ENCODE measurements at regions of chr6 and their contacts with region 1.

Region 1: GRCh38 chr6:157667211-157668008 is 155.6 kb upstream of the SNX9 start:
- DNase-seq: peak; percentile 57
- ATAC-seq: peak; percentile 73
- H3K4me3 ChIP-seq: no peak overlapping the region
- H3K27ac ChIP-seq: no peak overlapping the region
- H3K4me1 ChIP-seq: peaks cover 13% of the 10 kb centered on the region
- H3K27me3 ChIP-seq: no peaks in the 10 kb centered on the region
- CTCF ChIP-seq: peak; percentile 90

Region 2: DNA sequence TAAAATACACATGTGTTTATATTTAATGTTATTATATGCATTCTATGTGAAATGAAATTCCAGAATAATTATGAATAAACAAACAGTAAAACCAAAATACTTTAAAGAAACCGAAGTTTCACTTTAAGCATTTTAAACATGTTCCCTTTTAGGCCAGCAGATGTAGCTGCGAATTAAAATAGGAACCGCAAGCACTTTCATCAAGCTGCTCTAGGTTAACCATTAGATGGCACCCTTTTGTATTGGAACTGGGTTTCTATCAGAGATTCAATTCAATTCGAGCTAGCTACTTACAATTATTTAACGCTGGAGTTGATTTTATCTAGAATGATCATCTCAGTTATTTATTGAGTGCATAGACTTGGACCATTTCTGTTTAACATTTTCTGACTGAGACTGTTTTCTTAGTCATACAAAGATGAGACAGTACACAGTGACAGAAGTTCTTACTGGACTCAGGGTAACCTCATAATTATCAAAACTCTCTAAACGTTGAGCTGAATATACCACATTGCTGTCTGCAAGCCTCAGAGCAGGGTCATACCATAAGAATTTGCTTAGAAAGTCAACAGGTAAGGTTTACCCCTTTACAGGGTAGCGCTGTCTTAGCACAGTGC is 352.6 kb before region 1 on chr6:
- CTCF ChIA-PET with region 1: no interaction called
- POLR2A ChIA-PET with region 1: no interaction called
- in situ Hi-C with region 1: loop called (anchors 25 kb)
- intact Hi-C with region 1: loop called (anchors 2 kb)
- DNase-seq: peak; percentile 59
- ATAC-seq: peak; percentile 85
- H3K4me3 ChIP-seq: no peak overlapping the region
- H3K27ac ChIP-seq: no peak overlapping the region
- H3K4me1 ChIP-seq: peaks cover 9% of the 10 kb centered on the region
- H3K27me3 ChIP-seq: no peaks in the 10 kb centered on the region
- CTCF ChIP-seq: peak; percentile 91; the same call in 1 of the 2 replicates

Region 3: GRCh38 chr6:157323255-157323965 is 344.0 kb before region 1 on chr6 and contains the start of gene TMEM242:
- CTCF ChIA-PET with region 1: no interaction called
- POLR2A ChIA-PET with region 1: no interaction called
- in situ Hi-C with region 1: loop called (anchors 25 kb)
- intact Hi-C with region 1: no loop called
- DNase-seq: peak; percentile 86
- ATAC-seq: peak; percentile 98
- H3K4me3 ChIP-seq: peak within 1 kb of the TSS; percentile 80 to 97
- H3K27ac ChIP-seq: peak within 1 kb of the TSS; percentile 93
- H3K4me1 ChIP-seq: no peaks in the 10 kb centered on the region; the same call in 1 of the 2 replicates
- H3K27me3 ChIP-seq: no peaks in the 10 kb centered on the region
- CTCF ChIP-seq: no peak; the same call in 1 of the 2 replicates
- total RNA-seq, gene TMEM242: 6.8 TPM

Region 4: DNA sequence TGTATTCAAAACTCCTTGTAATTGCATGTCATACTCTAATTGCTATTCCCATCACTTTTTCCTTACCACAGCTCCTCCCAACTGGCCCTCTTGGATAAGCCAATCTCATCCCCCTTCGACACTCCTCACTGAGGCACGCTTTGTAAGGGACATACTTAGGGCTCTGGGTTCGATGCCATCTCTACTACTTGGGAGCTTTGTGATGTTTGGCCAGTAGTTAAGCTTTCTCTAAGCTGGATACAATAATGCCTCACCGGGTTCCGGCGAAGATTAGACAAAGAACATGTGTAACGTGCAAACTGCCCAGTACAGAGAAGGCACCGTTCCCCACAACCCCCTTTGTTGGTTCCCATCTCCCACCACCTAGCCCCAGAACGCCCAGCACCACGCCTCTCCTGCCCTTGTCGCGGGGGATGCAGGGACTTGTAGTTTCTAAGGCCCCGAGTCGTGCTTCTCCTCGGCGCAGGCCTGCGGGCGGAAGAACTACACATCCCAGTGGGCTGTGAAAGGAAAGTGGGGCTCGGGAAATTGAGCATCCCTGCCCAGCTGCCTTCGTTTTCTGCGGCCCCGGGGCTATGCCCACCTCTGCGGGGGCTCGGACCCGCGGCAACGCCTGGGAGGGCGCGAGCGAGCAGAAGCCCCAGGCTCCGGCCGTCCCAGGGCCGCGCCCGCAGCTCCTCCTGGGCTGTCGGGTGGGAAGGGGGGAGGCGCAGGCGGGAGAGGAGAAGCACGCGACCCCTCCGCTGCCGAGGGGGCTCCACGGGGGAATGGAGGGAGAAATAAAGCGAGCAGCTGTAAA is 287.6 kb before region 1 on chr6:
- CTCF ChIA-PET with region 1: no interaction called
- POLR2A ChIA-PET with region 1: no interaction called
- in situ Hi-C with region 1: no loop called
- intact Hi-C with region 1: loop called (anchors 5 kb)
- DNase-seq: peak; percentile 62
- ATAC-seq: peak; percentile 88
- H3K4me3 ChIP-seq: peak overlapping the region; percentile 68 to 88
- H3K27ac ChIP-seq: peak overlapping the region; percentile 91
- H3K4me1 ChIP-seq: peaks cover 22% of the 10 kb centered on the region
- H3K27me3 ChIP-seq: no peaks in the 10 kb centered on the region
- CTCF ChIP-seq: no peak

Region 5: GRCh38 chr6:157682931-157683403 is 15.6 kb after region 1 on chr6:
- CTCF ChIA-PET with region 1: no interaction called
- POLR2A ChIA-PET with region 1: interaction called, 14 read pairs
- in situ Hi-C with region 1: no loop called
- intact Hi-C with region 1: no loop called
- DNase-seq: peak; percentile 20
- ATAC-seq: no peak
- H3K4me3 ChIP-seq: no peak overlapping the region
- H3K27ac ChIP-seq: no peak overlapping the region
- H3K4me1 ChIP-seq: peaks cover 4% of the 10 kb centered on the region; the same call in 1 of the 2 replicates
- H3K27me3 ChIP-seq: no peaks in the 10 kb centered on the region
- CTCF ChIP-seq: no peak

Region 6: GRCh38 chr6:157706883-157707282 is 39.5 kb after region 1 on chr6:
- CTCF ChIA-PET with region 1: no interaction called
- POLR2A ChIA-PET with region 1: no interaction called
- in situ Hi-C with region 1: no loop called
- intact Hi-C with region 1: no loop called
- DNase-seq: no peak
- ATAC-seq: no peak; the same call in 1 of the 2 replicates
- H3K4me3 ChIP-seq: no peak overlapping the region
- H3K27ac ChIP-seq: no peak overlapping the region
- H3K4me1 ChIP-seq: no peaks in the 10 kb centered on the region
- H3K27me3 ChIP-seq: no peaks in the 10 kb centered on the region
- CTCF ChIP-seq: no peak

Region 7: GRCh38 chr6:157946865-157947532 is 279.6 kb after region 1 on chr6:
- CTCF ChIA-PET with region 1: no interaction called
- POLR2A ChIA-PET with region 1: no interaction called
- in situ Hi-C with region 1: no loop called
- intact Hi-C with region 1: no loop called
- DNase-seq: peak; percentile 25
- ATAC-seq: peak; percentile 72; the same call in 1 of the 2 replicates
- H3K4me3 ChIP-seq: no peak overlapping the region
- H3K27ac ChIP-seq: no peak overlapping the region
- H3K4me1 ChIP-seq: no peaks in the 10 kb centered on the region
- H3K27me3 ChIP-seq: no peaks in the 10 kb centered on the region
- CTCF ChIP-seq: no peak; the same call in 1 of the 2 replicates

Region 8: DNA sequence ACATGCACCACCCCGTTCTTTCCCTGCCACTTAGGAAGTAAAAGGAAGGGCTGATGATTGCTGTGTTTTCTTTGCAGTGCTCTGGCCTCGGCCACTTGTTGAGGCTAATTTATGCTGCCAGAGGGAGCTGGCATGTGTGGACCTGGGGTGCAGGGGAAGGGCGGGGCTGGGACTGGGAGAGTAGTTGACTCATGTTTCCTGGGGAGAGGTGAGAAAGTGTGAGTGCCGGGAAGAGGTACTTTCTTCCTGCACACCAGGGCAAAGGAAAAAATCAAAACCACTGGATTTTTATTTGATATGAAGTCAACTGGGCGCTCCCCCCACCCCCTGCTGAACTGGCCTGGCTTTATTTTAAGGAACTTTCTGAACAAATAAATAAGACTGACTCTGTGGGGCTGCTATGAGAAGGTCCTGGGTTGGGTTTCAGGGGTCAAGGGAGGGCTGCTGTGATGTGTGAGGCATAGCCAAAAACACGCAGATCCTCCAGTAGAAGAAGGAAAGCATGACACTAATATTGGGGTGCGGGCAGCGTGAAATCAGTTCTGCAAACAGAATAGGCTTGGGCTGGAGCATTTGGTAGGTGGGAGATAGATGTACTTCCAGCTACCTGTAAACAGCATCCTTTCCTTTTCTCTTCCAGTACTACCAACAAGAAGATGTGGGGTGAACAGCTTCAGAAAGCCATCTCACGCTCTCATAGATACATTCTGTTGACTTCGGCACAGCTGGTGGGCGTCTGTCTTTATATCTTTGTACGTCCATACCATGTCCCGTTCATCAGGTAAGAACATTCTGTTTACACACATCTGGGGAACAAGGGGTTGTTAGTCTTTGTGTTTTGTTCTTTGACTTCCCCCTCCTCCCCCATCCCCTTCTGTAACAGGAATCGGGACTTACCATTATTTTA is 401.7 kb after region 1 on chr6:
- CTCF ChIA-PET with region 1: interaction called, 10 read pairs
- POLR2A ChIA-PET with region 1: no interaction called
- in situ Hi-C with region 1: no loop called
- intact Hi-C with region 1: no loop called
- DNase-seq: no peak
- ATAC-seq: peak; percentile 64
- H3K4me3 ChIP-seq: no peak overlapping the region
- H3K27ac ChIP-seq: peak overlapping the region; percentile 74
- H3K4me1 ChIP-seq: peaks cover 41% of the 10 kb centered on the region
- H3K27me3 ChIP-seq: no peaks in the 10 kb centered on the region
- CTCF ChIP-seq: no peak

Measured in Panc1 (cell line).